Activated CD4-positive, alpha-beta memory T cell treated with anti-CD3 and anti-CD28 coated beads for 36 hours (primary cell): ENCODE measurements at regions of chr12 and their contacts with region 1.

Region 1: DNA sequence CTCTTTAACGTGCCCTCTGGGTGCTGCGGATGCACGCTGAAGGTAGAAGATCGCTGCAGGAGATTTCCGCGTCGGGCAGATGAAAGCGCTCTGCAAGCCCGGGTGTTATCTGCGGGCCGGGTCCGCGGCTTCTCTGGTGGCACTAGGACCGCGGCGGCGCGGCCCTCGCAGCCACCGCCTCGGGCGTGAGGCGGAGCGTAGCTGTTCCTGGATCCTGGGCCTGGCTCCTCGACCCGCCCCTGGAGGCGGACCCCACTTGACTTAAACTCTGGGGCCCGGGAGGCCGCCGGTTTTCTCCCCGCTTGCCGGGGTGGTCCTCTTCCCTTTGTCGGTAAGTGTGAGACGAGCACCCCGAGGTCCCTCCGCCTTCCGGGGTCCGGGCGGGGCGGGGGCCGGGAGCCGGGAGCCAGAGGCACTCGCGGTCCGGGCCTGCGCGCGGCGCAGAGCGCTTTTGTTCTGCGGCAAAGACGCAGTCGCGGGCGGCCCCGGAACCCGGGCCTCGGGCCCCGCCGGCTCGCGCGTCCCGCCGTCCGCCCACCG is at the start of gene RESF1:
- DNase-seq: peak; percentile 90
- H3K4me3 Mint-ChIP-seq: peak within 1 kb of the TSS; percentile 95
- H3K27ac Mint-ChIP-seq: peak within 1 kb of the TSS; percentile 97
- H3K4me1 Mint-ChIP-seq: peaks cover 68% of the 10 kb centered on the region
- H3K27me3 Mint-ChIP-seq: no peaks in the 10 kb centered on the region
- total RNA-seq, gene RESF1: 62.4 to 67.0 TPM

Region 2: DNA sequence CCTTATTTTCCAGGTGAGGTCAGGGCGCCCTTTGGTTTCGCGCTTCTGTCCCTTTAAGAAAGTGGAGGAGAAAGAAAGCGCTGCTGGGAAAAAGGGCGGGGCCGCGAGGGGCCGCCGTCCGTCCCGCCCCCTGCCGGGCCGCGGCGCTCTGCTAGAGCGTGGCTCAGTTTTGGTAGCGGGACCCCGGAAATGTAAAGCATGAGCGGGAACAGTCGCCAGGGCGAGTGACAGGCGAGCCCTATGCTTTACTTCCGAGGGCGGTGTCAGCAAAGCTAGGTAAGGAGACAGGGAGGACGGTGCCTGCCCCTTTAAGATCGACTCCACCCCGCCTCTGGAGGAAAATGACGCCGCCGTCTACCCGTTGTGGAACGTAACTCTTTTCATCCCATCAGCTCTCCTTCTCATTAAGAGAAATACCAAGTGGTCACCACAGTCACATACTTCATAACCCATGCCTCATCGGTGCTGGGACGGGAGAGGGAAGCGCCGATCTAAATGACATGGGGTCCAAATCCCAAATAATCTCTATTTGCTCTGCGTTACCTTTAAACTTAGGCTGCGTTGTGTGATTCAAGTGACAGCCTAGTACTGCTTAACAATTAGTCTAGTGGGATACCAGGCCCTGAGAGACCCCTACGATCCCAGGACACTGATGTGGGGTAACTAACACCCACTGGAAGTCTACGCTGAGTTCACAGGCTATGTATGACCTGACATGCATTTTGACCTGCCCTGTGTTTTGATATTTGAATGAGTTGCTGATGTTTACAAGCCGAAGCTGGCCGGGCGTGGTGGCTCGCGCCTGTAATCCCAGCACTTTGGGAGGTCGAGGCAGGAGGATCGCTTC is 299.9 kb before region 1 on chr12 and contains the start of gene ETFBKMT:
- CTCF ChIA-PET with region 1: no interaction called
- POLR2A ChIA-PET with region 1: interaction called, 6 read pairs
- intact Hi-C with region 1: loop called (anchors 1 kb)
- DNase-seq: peak; percentile 97
- H3K4me3 Mint-ChIP-seq: peak within 1 kb of the TSS; percentile 96
- H3K27ac Mint-ChIP-seq: peak within 1 kb of the TSS; percentile 95
- H3K4me1 Mint-ChIP-seq: peaks cover 7% of the 10 kb centered on the region
- H3K27me3 Mint-ChIP-seq: no peaks in the 10 kb centered on the region
- total RNA-seq, gene ETFBKMT: 1.1 to 1.3 TPM

Region 3: GRCh38 chr12:31728917-31729640 is 230.2 kb before region 1 on chr12 and contains the start of gene AMN1:
- CTCF ChIA-PET with region 1: no interaction called
- POLR2A ChIA-PET with region 1: interaction called, 4 read pairs
- intact Hi-C with region 1: loop called (anchors 1 kb)
- DNase-seq: peak; percentile 100
- H3K4me3 Mint-ChIP-seq: peak within 1 kb of the TSS; percentile 96
- H3K27ac Mint-ChIP-seq: peak within 1 kb of the TSS; percentile 97
- H3K4me1 Mint-ChIP-seq: peaks cover 41% of the 10 kb centered on the region
- H3K27me3 Mint-ChIP-seq: no peaks in the 10 kb centered on the region
- total RNA-seq, gene AMN1: 3.2 to 4.7 TPM

Region 4: DNA sequence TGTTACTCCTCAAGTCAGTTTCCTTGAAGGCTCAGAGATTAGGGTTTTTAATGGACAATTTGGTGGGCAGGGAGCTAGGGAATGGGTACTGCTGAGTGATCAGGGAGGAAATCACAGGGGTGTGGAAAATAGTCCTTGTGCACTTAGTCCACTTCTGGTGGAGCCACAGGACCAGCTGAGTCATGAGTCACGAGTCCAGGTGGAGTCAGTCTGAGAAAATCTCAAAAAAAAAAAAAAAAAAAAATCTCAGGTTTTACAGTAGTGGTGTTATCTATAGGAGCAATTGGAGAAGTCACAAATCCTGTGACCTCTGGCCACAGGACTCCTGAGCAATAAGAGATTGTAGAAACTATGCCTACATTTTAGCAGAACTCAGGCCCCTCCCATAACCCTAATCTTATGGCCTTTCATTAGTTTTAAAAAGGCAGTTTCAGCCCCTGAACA is 202.2 kb before region 1 on chr12:
- CTCF ChIA-PET with region 1: no interaction called
- POLR2A ChIA-PET with region 1: no interaction called
- intact Hi-C with region 1: no loop called
- DNase-seq: no peak
- H3K4me3 Mint-ChIP-seq: no peak overlapping the region
- H3K27ac Mint-ChIP-seq: no peak overlapping the region
- H3K4me1 Mint-ChIP-seq: peaks cover 11% of the 10 kb centered on the region
- H3K27me3 Mint-ChIP-seq: no peaks in the 10 kb centered on the region

Region 5: GRCh38 chr12:31813305-31813704 is 145.9 kb before region 1 on chr12:
- CTCF ChIA-PET with region 1: no interaction called
- POLR2A ChIA-PET with region 1: no interaction called
- intact Hi-C with region 1: loop called (anchors 2 kb)
- DNase-seq: no peak
- H3K4me3 Mint-ChIP-seq: no peak overlapping the region
- H3K27ac Mint-ChIP-seq: no peak overlapping the region
- H3K4me1 Mint-ChIP-seq: peaks cover 18% of the 10 kb centered on the region
- H3K27me3 Mint-ChIP-seq: no peaks in the 10 kb centered on the region

Region 6: DNA sequence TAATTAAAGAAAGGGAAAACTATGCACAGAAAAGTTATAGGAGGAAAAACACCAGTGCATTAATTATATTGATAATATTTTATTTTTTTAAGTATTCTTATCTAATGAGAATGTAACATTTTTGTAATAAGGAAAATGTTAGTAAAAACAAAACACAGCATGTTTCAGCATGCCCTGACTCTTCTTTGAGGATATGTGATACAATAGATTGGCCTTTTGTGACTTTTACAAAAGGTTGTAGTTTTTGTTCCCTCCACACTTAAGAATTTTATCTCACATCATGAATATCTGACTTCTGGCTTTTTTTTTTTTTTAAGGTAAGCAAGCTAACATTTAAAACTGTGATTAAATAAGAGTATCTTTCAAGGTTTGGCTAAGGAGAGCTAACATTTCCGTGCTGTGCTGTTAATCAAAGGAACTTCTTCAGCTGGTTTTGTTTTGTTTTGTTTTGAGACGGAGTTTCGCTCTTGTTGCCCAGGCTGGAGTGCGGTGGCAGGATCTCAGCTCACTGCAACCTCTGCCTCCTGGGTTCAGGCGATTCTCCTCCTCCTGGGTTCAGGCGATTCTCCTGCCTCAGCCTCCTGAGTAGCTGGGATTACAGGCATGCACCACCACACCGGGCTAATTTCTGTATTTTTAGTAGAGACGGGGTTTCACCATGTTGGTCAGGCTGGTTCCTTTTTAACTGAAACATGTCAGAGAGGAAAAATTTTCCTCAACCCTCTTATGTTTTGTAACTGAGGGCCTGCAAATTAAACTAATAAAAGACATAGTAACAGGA is 30.8 kb before region 1 on chr12:
- CTCF ChIA-PET with region 1: no interaction called
- POLR2A ChIA-PET with region 1: interaction called, 3 read pairs
- intact Hi-C with region 1: loop called (anchors 2 kb)
- DNase-seq: peak; percentile 54
- H3K4me3 Mint-ChIP-seq: peak overlapping the region; percentile 75
- H3K27ac Mint-ChIP-seq: peak overlapping the region; percentile 90
- H3K4me1 Mint-ChIP-seq: peaks cover 45% of the 10 kb centered on the region
- H3K27me3 Mint-ChIP-seq: no peaks in the 10 kb centered on the region

Region 7: DNA sequence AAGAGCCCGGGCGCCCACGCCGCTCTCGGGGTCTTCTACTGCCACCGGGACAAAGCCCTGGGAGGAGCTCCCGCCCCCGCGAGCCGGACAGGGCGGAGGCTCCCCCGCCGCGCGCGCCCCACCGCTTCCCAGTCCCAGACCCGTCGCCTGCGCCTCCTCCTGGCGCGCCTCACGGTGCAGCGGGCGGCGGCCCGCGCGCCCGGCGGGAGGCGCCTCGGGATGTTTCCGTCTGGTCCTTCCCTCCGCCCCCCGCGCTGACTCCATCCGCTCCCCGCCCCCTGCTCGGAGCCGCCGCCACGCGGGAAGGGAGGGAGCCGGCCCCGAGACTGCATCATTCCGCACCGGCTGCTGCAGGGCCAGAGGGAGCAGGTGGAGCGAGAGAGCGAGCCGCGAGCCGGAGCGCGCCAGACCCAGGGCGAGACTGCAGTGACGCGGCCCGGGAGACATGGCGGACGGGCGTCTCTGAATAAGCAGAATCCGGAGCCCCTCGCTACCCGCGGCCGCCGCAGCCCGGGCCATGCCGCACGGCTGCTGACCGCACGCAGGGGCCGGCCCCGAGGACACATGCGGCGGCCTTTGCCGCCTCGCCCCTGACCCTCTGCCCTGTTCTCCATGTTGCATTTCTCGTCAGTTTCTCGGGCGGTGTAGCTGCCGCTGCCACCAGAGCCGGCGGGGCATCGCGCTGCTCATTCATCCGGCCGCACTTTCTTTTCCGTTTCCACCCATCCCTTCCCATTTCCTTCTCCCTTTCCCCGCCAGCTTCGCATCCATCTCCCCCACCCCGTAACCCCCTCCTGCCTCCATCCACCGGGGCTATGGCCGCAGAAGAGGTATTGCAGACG is 147.5 kb after region 1 on chr12 and contains the start of gene BICD1:
- CTCF ChIA-PET with region 1: interaction called, 3 read pairs
- POLR2A ChIA-PET with region 1: interaction called, 5 read pairs
- intact Hi-C with region 1: loop called (anchors 2 kb)
- DNase-seq: peak; percentile 85
- H3K4me3 Mint-ChIP-seq: peak within 1 kb of the TSS; percentile 87
- H3K27ac Mint-ChIP-seq: peak within 1 kb of the TSS; percentile 82
- H3K4me1 Mint-ChIP-seq: peaks cover 23% of the 10 kb centered on the region
- H3K27me3 Mint-ChIP-seq: no peaks in the 10 kb centered on the region
- total RNA-seq, gene BICD1: 10.5 to 10.7 TPM

Region 8: GRCh38 chr12:32302218-32303173 is 343.3 kb after region 1 on chr12:
- CTCF ChIA-PET with region 1: no interaction called
- POLR2A ChIA-PET with region 1: no interaction called
- intact Hi-C with region 1: loop called (anchors 10 kb)
- DNase-seq: no peak
- H3K4me3 Mint-ChIP-seq: no peak overlapping the region
- H3K27ac Mint-ChIP-seq: no peak overlapping the region
- H3K4me1 Mint-ChIP-seq: no peaks in the 10 kb centered on the region
- H3K27me3 Mint-ChIP-seq: no peaks in the 10 kb centered on the region